Heart right ventricle (tissue), 16 donors: ENCODE measurements at regions of chr3 and their contacts with region 1.

Region 1: GRCh38 chr3:194879991-194880939 is 194.6 kb downstream of the FAM43A start:
- DNase-seq: peak; percentile 75 to 84
- ATAC-seq: peak; percentile 64 to 86 (median 76)
- H3K4me3 ChIP-seq: no peak overlapping the region
- H3K27ac ChIP-seq: peak overlapping the region; percentile 32 to 91 (median 81)
- H3K4me1 ChIP-seq: peaks cover 29 to 87% (median 64%) of the 10 kb centered on the region in 9 donors
- H3K27me3 ChIP-seq: no peaks in the 10 kb centered on the region
- CTCF ChIP-seq: no peak

Region 2: GRCh38 chr3:194930377-194931204 is 50.3 kb after region 1 on chr3:
- intact Hi-C with region 1: loop called in 4 of 10 experiments (anchors 5 kb)
- DNase-seq: peak in 1 of 2 donors; percentile 61
- ATAC-seq: peak; percentile 66 to 89 (median 84)
- H3K4me3 ChIP-seq: no peak overlapping the region
- H3K27ac ChIP-seq: peak overlapping the region; percentile 42 to 84 (median 80)
- H3K4me1 ChIP-seq: peaks cover 19 to 67% (median 48%) of the 10 kb centered on the region in 9 donors
- H3K27me3 ChIP-seq: no peaks in the 10 kb centered on the region
- CTCF ChIP-seq: no peak

Region 3: GRCh38 chr3:194952841-194953241 is 72.6 kb after region 1 on chr3:
- intact Hi-C with region 1: loop called in 1 of 10 experiments (anchors 5 kb)
- DNase-seq: peak in 1 of 2 donors; percentile 48
- ATAC-seq: peak; percentile 52 to 84 (median 76)
- H3K4me3 ChIP-seq: no peak overlapping the region
- H3K27ac ChIP-seq: peak overlapping the region in 9 of 10 donors; percentile 24 to 81 (median 49)
- H3K4me1 ChIP-seq: peaks cover 7 to 47% (median 24%) of the 10 kb centered on the region in 9 donors
- H3K27me3 ChIP-seq: no peaks in the 10 kb centered on the region
- CTCF ChIP-seq: no peak